ENCODE measurements at regions of chr7 and their contacts with region 1.

Region 1: DNA sequence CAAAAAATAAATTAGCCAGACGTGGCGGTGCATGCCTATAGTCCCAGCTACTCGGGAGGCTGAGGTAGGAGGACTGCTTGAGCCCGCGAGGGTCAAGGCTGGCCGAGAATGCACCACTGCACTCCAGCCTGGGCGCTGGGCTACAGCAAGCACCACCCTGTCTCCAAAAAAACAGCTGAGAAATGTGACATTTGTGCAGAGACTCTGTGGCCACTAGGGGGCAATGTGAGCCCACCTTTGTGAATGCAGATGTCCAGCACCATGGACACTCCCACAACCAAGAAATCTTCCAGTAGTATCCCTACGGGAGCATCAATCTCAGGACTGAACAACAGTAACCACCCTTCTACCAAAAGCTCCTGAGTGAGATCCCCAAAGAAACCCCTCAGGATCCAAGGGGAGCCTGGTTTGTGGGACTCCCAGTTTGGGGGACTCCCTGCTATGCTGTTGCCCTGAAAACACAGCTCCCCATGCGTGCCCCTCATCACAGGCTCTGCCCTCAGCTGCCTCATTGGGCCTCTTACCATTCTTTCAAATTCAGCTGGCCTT is 6.2 kb upstream of the AHCYL2 start:
- DNase-seq: no peak
- H3K4me3 ChIP-seq: no peak overlapping the region
- H3K27ac ChIP-seq: no peak overlapping the region
- H3K4me1 ChIP-seq: peaks cover 0 to 8% (median 0%) of the 10 kb centered on the region in 3 donors
- H3K27me3 ChIP-seq: peaks cover 0 to 8% (median 0%) of the 10 kb centered on the region in 4 donors
- CTCF ChIP-seq: peak; percentile 83 to 93 (median 88)
- POLR2A ChIP-seq: no peak

Region 2: DNA sequence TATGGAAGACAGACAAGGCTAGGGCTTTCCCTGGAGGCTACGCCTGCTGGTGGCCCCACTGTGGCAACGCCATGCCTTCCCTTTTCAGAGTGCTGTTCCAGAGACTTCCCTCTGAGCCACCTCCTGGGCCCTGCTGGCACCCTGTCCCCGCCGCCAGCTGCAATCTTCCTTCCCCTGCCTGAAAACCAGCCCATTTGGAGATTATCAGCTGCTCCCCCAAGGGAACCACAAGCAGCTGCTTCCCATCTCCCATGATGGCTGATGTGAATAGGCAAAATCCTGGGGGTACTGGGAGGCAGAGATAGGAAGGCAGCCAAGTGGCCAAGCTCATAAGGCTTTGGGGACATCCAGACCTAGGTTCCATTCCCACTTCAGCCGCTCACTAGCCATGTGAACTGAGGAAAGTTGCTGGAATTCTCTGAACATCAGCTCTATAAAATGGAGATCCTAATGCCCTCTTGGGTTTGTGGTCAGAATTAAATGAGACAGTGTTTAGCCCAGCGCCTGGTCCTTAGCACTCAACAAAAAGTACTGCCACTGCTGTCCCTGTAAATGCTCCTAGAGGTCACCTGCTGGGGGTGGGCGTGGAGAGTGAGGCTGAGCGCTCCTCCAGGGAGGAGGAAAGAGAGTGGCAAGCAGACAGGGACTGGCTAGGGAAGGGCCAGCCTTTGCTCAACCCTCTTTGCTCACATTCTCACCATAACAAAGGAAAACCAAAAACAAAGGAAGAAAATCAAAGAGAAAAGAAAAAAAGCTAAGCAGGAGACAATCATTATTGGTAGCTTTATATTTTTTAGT is 68.2 kb before region 1 on chr7:
- intact Hi-C with region 1: no loop called
- DNase-seq: no peak
- H3K4me3 ChIP-seq: no peak overlapping the region
- H3K27ac ChIP-seq: no peak overlapping the region
- H3K4me1 ChIP-seq: peaks cover 0 to 6% (median 0%) of the 10 kb centered on the region in 3 donors
- H3K27me3 ChIP-seq: peaks cover 0 to 44% (median 0%) of the 10 kb centered on the region in 4 donors
- CTCF ChIP-seq: no peak
- POLR2A ChIP-seq: no peak

Region 3: GRCh38 chr7:129271500-129272355 is 53.1 kb after region 1 on chr7:
- intact Hi-C with region 1: loop called (anchors 5 kb)
- DNase-seq: no peak
- H3K4me3 ChIP-seq: no peak overlapping the region
- H3K27ac ChIP-seq: no peak overlapping the region
- H3K4me1 ChIP-seq: no peaks in the 10 kb centered on the region
- H3K27me3 ChIP-seq: no peaks in the 10 kb centered on the region
- CTCF ChIP-seq: peak; percentile 53 to 74 (median 64)
- POLR2A ChIP-seq: no peak

Region 4: GRCh38 chr7:129315960-129316359 is 97.4 kb after region 1 on chr7:
- intact Hi-C with region 1: no loop called
- DNase-seq: no peak
- H3K4me3 ChIP-seq: no peak overlapping the region
- H3K27ac ChIP-seq: peak overlapping the region; percentile 38 to 61 (median 50)
- H3K4me1 ChIP-seq: peaks cover 0 to 39% (median 3%) of the 10 kb centered on the region in 3 donors
- H3K27me3 ChIP-seq: no peaks in the 10 kb centered on the region
- CTCF ChIP-seq: no peak
- POLR2A ChIP-seq: no peak

Region 5: DNA sequence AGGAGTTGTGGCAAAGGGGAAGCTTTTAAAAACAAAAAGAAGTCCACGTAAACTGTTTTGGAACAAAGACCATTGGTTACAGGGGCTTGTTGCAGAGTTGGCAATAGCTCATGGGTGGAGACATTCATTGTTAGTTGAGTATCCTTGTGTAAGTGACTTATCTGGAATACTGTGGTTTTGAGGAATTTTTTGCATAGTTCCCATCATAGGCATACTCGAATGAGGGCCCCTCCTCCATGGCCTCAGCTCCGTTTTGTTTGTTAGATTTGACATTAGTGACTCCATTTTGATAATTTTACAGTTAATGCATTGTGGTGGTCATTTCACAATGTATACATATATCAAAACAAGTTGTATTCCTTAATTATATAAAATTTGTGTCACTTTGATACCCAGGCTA is 270.9 kb after region 1 on chr7:
- intact Hi-C with region 1: loop called (anchors 10 kb)
- DNase-seq: no peak
- H3K4me3 ChIP-seq: no peak overlapping the region
- H3K27ac ChIP-seq: no peak overlapping the region
- H3K4me1 ChIP-seq: no peaks in the 10 kb centered on the region
- H3K27me3 ChIP-seq: no peaks in the 10 kb centered on the region
- CTCF ChIP-seq: no peak
- POLR2A ChIP-seq: no peak

Region 6: GRCh38 chr7:129597672-129598071 is 379.1 kb after region 1 on chr7:
- intact Hi-C with region 1: no loop called
- DNase-seq: no peak
- H3K4me3 ChIP-seq: no peak overlapping the region
- H3K27ac ChIP-seq: no peak overlapping the region
- H3K4me1 ChIP-seq: no peaks in the 10 kb centered on the region
- H3K27me3 ChIP-seq: no peaks in the 10 kb centered on the region
- CTCF ChIP-seq: no peak
- POLR2A ChIP-seq: no peak

Region 7: GRCh38 chr7:130553398-130554029 is 1334.9 kb after region 1 on chr7:
- intact Hi-C with region 1: no loop called
- DNase-seq: no peak
- H3K4me3 ChIP-seq: no peak overlapping the region
- H3K27ac ChIP-seq: no peak overlapping the region
- H3K4me1 ChIP-seq: no peaks in the 10 kb centered on the region
- H3K27me3 ChIP-seq: no peaks in the 10 kb centered on the region
- CTCF ChIP-seq: no peak
- POLR2A ChIP-seq: no peak

Measured in esophagus squamous epithelium (tissue), 5 donors.